Lower leg skin (tissue), 4 donors: ENCODE measurements at regions of chr22 and their contacts with region 1.

Region 1: DNA sequence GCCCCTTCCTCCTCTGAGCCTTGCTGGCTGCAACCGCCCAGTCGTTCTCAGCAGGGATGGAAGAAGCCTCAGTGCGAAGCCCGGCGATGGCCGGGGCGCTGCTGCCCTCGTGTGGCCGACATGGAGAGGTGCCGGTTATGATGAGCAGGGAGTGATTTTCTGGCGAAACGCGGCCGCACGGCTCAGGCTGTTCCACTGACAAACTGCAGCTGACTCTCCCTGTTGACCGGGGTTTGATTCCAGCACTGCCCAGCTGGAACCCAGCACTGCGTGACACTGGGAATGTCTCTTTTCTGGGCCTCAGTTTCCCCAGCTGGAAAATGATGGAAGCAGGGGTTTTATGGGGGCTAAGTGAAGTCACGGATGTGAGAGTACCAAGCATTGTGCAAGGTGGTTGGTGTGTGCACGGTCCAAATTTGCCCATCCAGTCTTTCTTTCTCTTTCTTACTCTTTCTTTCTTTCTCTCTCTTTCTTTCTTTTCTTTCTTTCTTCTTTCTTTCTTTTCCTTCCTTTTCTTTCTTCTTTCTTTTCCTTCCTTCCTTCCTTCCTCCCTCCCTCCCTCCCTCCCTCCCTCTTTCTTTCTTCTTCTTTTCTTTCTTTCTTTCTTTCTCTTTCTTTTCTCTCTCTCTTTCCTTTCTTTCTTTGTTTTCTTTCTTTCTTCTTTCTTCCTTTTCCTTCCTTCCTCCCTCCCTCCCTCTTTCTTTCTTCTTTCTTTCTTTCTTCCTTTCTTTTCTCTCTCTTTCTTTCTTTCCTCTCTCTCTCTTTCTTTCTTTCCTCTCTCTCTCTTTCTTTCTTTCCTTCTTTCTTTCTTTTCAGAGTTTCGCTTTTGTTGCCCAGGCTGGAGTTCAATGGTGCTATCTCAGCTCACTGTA is 25.8 kb upstream of the MPPED1 start:
- DNase-seq: peak; percentile 55 to 94
- H3K4me3 ChIP-seq: no peak overlapping the region
- CTCF ChIP-seq: peak in 1 of 3 donors; percentile 70
- POLR2A ChIP-seq: no peak

Region 2: GRCh38 chr22:43826142-43827002 is 440.4 kb after region 1 on chr22:
- intact Hi-C with region 1: loop called (anchors 5 kb)
- DNase-seq: peak in 1 of 2 donors; percentile 83
- H3K4me3 ChIP-seq: no peak overlapping the region
- CTCF ChIP-seq: no peak
- POLR2A ChIP-seq: no peak